ENCODE measurements at regions of chr4 and their contacts with region 1.

Region 1: DNA sequence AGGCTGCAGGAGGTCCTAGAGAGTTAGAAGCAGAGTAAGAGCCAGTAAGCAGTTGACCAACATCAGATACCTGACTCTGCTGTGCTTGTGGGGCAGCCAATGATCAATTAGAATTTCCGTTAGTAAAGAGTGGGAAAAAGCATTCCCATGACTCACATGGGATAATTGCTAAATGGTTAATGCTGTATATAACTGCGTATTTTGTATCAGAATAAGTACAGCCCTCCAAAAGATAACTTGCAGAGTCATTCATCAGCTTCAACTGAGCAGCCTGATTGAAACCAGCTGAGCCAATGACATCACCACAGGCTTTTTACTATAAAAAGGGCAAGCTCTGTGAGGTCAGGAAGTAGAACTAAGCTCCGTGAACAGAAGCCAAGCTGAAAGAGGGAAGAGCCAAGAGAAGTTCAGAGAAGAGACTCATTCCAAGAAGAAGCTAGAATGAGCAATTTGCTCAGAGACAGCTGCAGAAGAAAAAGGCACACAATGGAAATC is 67.9 kb downstream of the PPP3CA start:
- DNase-seq: peak; percentile 64
- ATAC-seq: peak; percentile 58
- H3K4me3 ChIP-seq: peak overlapping the region in 3 of 5 experiments; percentile 21 to 47 (median 38)
- H3K4me3 Mint-ChIP-seq: peak overlapping the region; percentile 64
- H3K27ac ChIP-seq: peak overlapping the region; percentile 49 to 69
- H3K27ac Mint-ChIP-seq: peak overlapping the region; percentile 58
- H3K4me1 ChIP-seq: peaks cover 41 to 44% of the 10 kb centered on the region in 2 donors
- H3K4me1 Mint-ChIP-seq: peaks cover 79% of the 10 kb centered on the region
- H3K27me3 ChIP-seq: no peaks in the 10 kb centered on the region
- H3K27me3 Mint-ChIP-seq: no peaks in the 10 kb centered on the region
- CTCF ChIP-seq: no peak

Region 2: GRCh38 chr4:101232074-101232776 is 47.2 kb before region 1 on chr4:
- CTCF ChIA-PET with region 1: no interaction called
- POLR2A ChIA-PET with region 1: no interaction called
- intact Hi-C with region 1: no loop called
- DNase-seq: no peak
- ATAC-seq: no peak
- H3K4me3 ChIP-seq: no peak overlapping the region
- H3K4me3 Mint-ChIP-seq: no peak overlapping the region
- H3K27ac ChIP-seq: no peak overlapping the region
- H3K27ac Mint-ChIP-seq: no peak overlapping the region
- H3K4me1 ChIP-seq: peaks cover 9 to 21% of the 10 kb centered on the region in 2 donors
- H3K4me1 Mint-ChIP-seq: peaks cover 53% of the 10 kb centered on the region
- H3K27me3 ChIP-seq: no peaks in the 10 kb centered on the region
- H3K27me3 Mint-ChIP-seq: no peaks in the 10 kb centered on the region
- CTCF ChIP-seq: no peak

Region 3: DNA sequence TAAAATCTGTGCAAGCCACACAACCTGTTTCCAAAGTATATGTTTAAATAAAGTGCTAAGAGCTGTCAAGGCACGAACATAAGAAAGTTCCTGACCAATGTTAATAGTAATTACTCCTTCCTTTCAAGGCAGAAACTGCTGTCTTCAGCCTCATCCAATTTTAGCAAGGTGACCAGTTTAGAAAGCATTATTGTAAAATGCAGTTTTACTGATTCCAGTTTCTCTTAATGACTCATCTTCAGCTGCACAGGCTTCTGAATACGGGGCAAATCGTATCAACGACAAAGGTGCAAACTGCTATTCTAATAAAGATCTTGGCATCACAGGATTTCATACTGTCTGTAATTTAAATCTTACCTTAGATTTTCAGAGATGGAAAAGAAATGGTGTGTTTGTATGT is 19.5 kb before region 1 on chr4:
- CTCF ChIA-PET with region 1: interaction called, 3 read pairs
- POLR2A ChIA-PET with region 1: no interaction called
- intact Hi-C with region 1: loop called (anchors 2 kb)
- DNase-seq: no peak
- ATAC-seq: no peak
- H3K4me3 ChIP-seq: no peak overlapping the region
- H3K4me3 Mint-ChIP-seq: peak overlapping the region; percentile 11
- H3K27ac ChIP-seq: peak overlapping the region in 1 of 2 donors; percentile 74
- H3K27ac Mint-ChIP-seq: peak overlapping the region; percentile 46
- H3K4me1 ChIP-seq: peaks cover 36 to 74% of the 10 kb centered on the region in 2 donors
- H3K4me1 Mint-ChIP-seq: peaks cover 88% of the 10 kb centered on the region
- H3K27me3 ChIP-seq: no peaks in the 10 kb centered on the region
- H3K27me3 Mint-ChIP-seq: no peaks in the 10 kb centered on the region
- CTCF ChIP-seq: no peak

Region 4: DNA sequence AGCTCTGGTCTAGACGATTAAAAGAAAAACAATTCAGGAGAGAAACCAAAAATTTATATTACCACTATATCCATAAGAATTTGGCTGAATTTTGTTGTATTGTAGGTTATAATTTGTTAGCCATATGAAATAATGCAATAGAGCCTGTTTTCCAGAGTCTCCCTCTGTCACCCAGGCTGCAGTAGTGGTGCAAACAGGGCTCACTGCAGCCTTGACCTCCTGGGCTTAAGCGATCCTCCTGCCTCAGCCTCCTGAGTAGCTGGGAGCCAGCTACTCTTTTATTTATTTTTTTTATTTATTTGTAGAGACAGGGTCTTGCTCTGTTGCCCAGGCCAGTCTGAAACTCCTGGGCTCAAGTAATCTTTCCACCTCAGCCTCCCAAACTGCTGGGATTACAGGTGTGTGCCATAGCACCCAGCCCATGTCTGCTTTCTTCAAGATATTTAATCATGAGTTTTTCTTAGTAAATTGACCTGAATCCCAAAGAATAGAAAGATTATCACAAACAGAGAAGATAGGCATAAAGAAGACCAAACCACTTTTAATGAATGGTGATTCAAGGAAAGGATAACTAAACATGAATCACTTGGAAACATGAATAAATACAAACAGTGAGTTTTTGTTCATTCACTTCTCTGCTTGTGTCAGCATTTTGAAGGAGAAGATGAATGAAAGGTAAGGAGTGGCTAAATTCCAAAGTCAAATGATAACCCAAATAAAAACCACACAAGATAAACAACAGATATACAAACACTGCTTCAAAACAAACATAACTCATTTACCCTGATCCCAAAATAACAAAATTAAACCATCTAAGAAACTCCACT is 14.2 kb before region 1 on chr4:
- CTCF ChIA-PET with region 1: interaction called, 4 read pairs
- POLR2A ChIA-PET with region 1: no interaction called
- intact Hi-C with region 1: loop called (anchors 2 kb)
- DNase-seq: no peak
- ATAC-seq: no peak
- H3K4me3 ChIP-seq: no peak overlapping the region
- H3K4me3 Mint-ChIP-seq: peak overlapping the region; percentile 63
- H3K27ac ChIP-seq: no peak overlapping the region
- H3K27ac Mint-ChIP-seq: peak overlapping the region; percentile 76
- H3K4me1 ChIP-seq: peaks cover 33 to 65% of the 10 kb centered on the region in 2 donors
- H3K4me1 Mint-ChIP-seq: peaks cover 82% of the 10 kb centered on the region
- H3K27me3 ChIP-seq: no peaks in the 10 kb centered on the region
- H3K27me3 Mint-ChIP-seq: no peaks in the 10 kb centered on the region
- CTCF ChIP-seq: no peak

Region 5: DNA sequence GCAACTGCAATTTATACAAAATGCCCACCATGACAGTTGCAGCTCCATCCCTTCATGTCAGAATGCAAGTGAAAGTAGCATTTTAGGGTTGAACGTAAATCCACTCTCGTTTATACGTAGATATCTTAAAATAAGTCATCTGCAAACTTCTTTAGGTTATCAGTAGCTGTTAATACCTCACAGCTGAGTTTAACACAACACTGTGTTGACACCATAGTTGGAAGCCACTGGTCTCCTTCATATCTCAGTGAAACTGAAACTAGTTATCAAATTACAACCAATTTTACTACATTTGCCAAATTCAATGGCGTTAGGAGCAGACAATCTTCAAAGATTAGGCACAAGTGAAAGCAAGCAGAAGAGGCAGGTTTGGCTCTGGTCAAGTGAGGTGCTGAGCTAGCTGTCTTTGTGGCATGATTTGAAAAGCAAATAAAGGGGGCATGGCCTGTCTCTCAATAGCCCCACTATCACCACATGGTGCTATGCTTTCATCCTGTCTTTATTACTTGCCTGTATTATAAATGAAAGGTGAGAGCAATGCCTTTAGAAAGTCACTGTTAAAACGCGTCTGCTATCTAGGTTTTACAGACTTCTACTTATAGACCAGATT is 55.6 kb after region 1 on chr4:
- CTCF ChIA-PET with region 1: no interaction called
- POLR2A ChIA-PET with region 1: interaction called, 5 read pairs
- intact Hi-C with region 1: loop called (anchors 5 kb)
- DNase-seq: no peak
- ATAC-seq: no peak
- H3K4me3 ChIP-seq: no peak overlapping the region
- H3K4me3 Mint-ChIP-seq: peak overlapping the region; percentile 26
- H3K27ac ChIP-seq: no peak overlapping the region
- H3K27ac Mint-ChIP-seq: peak overlapping the region; percentile 50
- H3K4me1 ChIP-seq: peaks cover 24 to 36% of the 10 kb centered on the region in 2 donors
- H3K4me1 Mint-ChIP-seq: peaks cover 86% of the 10 kb centered on the region
- H3K27me3 ChIP-seq: no peaks in the 10 kb centered on the region
- H3K27me3 Mint-ChIP-seq: no peaks in the 10 kb centered on the region
- CTCF ChIP-seq: no peak

Region 6: DNA sequence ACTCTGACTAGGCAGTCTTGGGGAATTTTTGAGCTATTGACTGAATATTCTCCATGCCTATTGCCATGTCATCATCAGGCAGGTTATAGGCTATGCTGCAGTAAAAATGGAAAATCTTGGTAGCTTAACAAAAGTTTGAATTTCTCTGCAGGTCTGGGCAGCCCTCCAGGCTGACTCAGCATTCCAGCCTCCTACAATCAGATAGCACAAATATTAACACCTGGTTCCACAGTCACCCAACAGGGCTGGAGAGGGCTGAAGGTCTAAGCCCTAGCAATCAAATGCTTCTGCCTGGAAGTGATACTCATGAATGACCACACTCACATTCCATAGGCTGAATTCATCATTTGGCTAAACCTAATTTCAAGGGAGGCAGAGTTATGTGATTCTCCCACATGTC is 77.5 kb after region 1 on chr4:
- CTCF ChIA-PET with region 1: no interaction called
- POLR2A ChIA-PET with region 1: no interaction called
- intact Hi-C with region 1: no loop called
- DNase-seq: no peak
- ATAC-seq: no peak
- H3K4me3 ChIP-seq: no peak overlapping the region
- H3K4me3 Mint-ChIP-seq: no peak overlapping the region
- H3K27ac ChIP-seq: no peak overlapping the region
- H3K27ac Mint-ChIP-seq: no peak overlapping the region
- H3K4me1 ChIP-seq: peaks cover 22 to 24% of the 10 kb centered on the region in 2 donors
- H3K4me1 Mint-ChIP-seq: peaks cover 30% of the 10 kb centered on the region
- H3K27me3 ChIP-seq: no peaks in the 10 kb centered on the region
- H3K27me3 Mint-ChIP-seq: no peaks in the 10 kb centered on the region
- CTCF ChIP-seq: no peak